Astrocyte of the cerebellum (primary cell): ENCODE measurements at regions of chr3 and their contacts with region 1.

Region 1: DNA sequence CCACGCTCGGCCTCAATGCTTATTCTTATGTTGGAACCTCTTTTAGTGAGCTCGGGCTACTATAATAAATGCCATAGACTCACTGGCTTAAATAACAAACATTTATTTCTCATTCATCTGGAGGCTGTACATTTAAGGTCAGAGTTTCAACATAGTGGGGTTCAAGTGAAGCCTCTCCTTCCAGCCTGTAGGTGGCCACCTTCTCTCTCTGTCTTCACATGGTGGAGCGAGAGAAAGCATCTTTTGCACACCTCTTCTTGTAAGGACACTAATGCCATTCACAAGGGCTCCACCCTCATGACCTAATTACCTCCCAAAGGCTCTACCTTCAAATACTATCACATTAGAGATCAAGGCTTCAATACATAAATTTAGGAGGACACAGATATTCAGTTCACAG is 520.3 kb upstream of the EPHA6 start:
- DNase-seq: no peak
- H3K4me3 ChIP-seq: no peak overlapping the region
- CTCF ChIP-seq: no peak

Region 2: DNA sequence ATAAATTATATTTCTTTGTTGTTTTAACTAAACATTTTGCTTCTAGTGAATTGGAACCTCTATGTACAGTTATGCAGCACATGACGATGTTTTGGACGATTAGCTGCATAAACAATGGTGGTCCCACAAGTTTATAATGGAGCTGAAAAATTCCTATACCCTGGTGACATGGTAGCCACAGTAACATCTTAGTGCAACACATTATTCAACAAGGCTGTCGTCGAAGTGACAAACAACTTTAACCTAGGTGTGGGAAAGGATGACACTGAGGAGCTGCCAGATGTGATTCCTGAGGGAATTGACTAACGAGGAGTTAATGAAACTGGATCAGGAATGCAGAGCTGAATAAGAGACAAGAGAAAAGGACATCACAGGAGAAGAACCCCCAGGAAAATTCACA is 68.6 kb before region 1 on chr3:
- in situ Hi-C with region 1: loop called (anchors 10 kb)
- DNase-seq: no peak
- H3K4me3 ChIP-seq: no peak overlapping the region
- CTCF ChIP-seq: no peak

Region 3: GRCh38 chr3:96361241-96361640 is 67.1 kb after region 1 on chr3:
- in situ Hi-C with region 1: no loop called
- DNase-seq: no peak
- H3K4me3 ChIP-seq: no peak overlapping the region
- CTCF ChIP-seq: no peak

Region 4: DNA sequence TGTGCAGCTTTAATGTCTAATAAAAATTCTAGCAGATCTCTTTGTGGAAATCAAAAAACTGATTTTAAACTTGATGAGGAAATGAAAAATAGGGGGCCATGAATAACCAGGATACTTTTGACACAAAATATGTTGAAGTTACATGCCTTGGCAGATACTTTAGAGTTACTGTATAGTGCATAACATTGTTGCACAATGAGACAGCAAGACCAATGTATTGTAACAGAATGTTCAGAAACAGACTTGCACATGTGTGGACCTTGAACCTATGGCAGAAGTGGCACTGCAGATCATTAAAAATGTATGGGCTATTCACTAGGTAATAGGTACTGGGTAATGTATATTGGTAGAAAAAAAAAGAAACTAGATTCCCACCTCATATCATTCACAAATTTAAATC is 1127.4 kb after region 1 on chr3:
- in situ Hi-C with region 1: no loop called
- DNase-seq: no peak
- H3K4me3 ChIP-seq: no peak overlapping the region
- CTCF ChIP-seq: no peak